Body of pancreas (tissue), 4 donors: ENCODE measurements at regions of chr6 and their contacts with region 1.

Region 1: DNA sequence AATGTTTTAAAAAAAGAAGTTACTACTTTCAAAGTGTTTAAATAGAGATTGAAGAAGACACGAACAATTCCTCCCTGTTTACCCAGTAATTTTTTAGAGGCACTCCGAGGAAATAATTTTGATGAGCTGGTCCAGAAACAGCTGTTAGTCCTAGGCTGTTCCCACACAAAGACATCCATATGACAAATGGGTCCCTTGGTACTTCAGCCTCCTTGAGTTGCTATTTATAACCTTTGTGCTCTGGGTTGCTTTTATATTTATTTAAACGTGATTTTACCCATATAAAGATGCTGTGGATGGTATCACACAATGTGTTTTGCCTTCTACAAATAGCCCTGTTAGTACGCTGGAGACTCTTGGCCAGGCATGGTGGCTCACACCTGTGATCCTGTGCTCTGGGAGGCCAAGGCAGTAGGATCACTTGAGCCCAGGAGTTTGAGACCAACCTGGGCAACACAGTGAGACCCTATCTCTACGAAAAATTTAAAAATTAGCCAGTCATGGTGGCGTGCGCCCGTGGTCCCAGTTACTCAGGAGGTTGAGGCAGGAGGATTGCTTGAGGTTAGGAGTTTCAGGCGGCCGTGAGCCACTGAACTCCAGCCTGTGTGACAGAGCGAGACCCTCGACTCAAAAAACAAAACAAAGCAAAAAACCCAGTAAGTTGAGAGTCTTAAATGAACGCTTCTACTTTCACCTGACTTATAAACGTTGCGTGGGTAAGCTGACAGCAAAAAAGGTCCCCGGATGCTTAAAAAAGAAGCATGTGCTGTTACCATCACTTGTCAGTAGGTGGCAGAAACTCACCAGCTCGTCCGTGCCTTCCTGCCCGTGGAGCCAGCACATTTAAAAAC is 56.9 kb upstream of the ARMH2 start:
- DNase-seq: peak; percentile 68 to 78 (median 70)
- ATAC-seq: peak; percentile 85
- H3K4me3 ChIP-seq: no peak overlapping the region
- H3K27ac ChIP-seq: no peak overlapping the region
- H3K4me1 ChIP-seq: peaks cover 15% of the 10 kb centered on the region
- H3K27me3 ChIP-seq: no peaks in the 10 kb centered on the region
- CTCF ChIP-seq: peak; percentile 63 to 92 (median 88)
- POLR2A ChIP-seq: no peak

Region 2: DNA sequence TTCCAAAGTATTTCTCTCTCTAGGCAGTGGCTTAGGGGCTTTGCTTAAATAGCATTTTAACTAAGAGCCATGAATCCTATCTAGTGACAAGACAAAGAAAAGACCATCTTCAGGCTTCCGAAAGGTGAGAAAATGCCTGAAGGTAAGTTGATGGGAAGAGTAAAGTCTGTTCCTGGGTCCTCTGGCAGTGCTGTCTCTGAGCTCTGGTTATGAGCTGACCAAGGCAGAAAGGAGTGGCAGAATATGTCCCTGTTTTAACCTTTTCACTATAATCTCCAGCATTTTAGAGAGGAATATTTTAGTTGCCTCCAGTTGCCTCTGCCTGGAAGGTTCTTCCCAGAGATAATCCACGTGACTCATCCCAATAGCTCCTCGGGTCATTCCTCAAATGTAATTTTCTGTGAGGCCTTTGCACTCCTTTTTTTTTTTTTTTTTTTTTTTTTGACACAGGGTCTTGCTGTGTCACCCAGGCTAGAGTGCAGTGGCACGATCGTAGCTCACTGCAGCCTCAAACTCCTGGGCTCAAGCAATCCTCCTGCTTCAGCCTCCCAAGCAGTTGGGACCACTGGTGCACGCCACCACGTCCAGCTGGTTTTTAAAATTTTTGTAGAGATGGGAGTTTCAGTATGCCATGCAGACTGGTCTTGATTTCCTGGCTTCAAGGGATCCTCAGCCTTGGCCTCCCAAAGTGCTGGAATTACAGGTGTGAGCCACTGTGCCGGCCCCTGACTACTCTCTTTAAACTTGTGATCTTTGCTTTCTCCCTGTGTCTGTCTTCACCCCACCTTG is 53.2 kb before region 1 on chr6:
- intact Hi-C with region 1: no loop called
- DNase-seq: no peak
- ATAC-seq: peak; percentile 15
- H3K4me3 ChIP-seq: no peak overlapping the region
- H3K27ac ChIP-seq: peak overlapping the region in 2 of 4 donors; percentile 50 to 62
- H3K4me1 ChIP-seq: peaks cover 32% of the 10 kb centered on the region
- H3K27me3 ChIP-seq: no peaks in the 10 kb centered on the region
- CTCF ChIP-seq: no peak
- POLR2A ChIP-seq: no peak

Region 3: GRCh38 chr6:25078141-25078540 is 222.5 kb after region 1 on chr6:
- intact Hi-C with region 1: loop called (anchors 5 kb)
- DNase-seq: no peak
- ATAC-seq: no peak
- H3K4me3 ChIP-seq: no peak overlapping the region
- H3K27ac ChIP-seq: no peak overlapping the region
- H3K4me1 ChIP-seq: no peaks in the 10 kb centered on the region
- H3K27me3 ChIP-seq: no peaks in the 10 kb centered on the region
- CTCF ChIP-seq: no peak
- POLR2A ChIP-seq: no peak